ENCODE measurements at regions of chr6 and their contacts with region 1.

Region 1: DNA sequence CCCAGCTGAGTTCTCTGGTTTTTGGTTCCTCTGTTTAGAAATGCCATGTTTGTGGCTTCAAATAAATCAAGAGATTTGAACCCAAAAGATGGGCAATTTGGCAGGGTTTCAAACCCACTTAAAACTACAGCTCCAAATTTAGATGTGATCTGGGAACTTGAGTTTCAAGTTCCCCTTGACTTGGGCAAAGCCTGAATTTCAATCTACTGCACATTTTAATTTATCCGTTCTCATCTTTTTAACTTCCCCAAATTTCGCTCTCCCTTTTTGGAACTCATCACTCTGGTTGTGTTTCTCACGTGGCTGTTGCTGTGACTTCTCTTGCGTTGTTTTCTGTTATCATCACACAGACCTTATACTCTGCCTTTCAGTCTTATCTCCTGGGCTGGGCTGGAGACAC is 230.9 kb downstream of the CDC5L start:
- DNase-seq: no peak

Region 2: DNA sequence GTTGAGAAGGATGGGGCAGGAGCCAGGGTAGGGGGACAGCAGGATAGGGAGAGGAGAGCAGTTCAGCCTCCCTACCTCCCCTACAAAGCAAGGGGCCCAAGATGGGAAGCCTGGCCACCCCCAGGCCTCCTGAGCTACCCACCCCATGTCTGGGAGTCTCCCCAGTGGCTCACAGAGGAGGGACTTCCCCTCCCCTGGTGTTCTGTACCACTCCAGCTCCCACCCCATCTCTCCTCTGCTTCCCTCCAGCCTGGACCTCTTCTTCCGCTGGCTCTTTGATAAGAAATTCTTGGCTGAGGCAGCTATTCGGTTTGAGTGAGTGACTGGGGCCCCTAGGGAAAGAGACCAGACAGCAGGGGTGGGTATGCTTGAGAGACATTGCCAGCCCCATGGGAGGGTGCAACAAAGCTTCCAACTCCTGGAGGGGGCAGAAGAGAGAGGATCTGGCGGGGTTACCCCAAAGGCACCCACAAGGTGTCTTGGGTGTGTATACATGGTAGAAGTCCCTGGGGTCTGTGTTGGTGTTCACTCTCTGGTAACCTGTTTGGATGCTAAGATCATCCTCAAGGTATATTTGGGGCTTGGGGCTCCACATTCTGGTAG is 468.0 kb before region 1 on chr6:
- intact Hi-C with region 1: no loop called
- DNase-seq: no peak

Region 3: GRCh38 chr6:44630125-44631028 is 12.0 kb after region 1 on chr6:
- intact Hi-C with region 1: loop called in 1 of 2 experiments (anchors 1 kb)
- DNase-seq: no peak

Region 4: DNA sequence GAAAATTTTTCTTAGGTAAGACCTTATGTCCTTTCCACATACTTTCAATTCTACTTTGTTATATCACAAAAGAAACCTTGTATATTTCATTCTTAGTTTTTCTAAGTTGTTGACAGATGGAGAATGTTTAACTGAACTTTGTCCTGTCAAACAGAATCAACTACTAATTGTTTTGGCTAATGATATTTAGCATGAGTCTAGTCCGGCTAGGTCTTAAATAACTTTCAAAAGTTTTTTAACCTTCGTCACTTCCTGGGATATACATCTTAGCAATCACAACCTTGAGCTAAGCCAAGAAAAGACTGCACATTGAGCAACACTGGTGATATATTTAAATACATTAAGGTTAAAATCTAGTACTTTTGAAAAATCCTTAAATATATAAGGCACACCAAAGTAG is 646.9 kb after region 1 on chr6:
- intact Hi-C with region 1: no loop called
- DNase-seq: no peak

Measured in posterior vena cava (tissue), 2 donors.